Activated naive CD4-positive, alpha-beta T cell treated with anti-CD3 and anti-CD28 coated beads, Interleukin-2, amount 10 ng/mL, durations not matched to agents 7 days and 5 days (primary cell): ENCODE measurements at regions of chr11 and their contacts with region 1.

Region 1: DNA sequence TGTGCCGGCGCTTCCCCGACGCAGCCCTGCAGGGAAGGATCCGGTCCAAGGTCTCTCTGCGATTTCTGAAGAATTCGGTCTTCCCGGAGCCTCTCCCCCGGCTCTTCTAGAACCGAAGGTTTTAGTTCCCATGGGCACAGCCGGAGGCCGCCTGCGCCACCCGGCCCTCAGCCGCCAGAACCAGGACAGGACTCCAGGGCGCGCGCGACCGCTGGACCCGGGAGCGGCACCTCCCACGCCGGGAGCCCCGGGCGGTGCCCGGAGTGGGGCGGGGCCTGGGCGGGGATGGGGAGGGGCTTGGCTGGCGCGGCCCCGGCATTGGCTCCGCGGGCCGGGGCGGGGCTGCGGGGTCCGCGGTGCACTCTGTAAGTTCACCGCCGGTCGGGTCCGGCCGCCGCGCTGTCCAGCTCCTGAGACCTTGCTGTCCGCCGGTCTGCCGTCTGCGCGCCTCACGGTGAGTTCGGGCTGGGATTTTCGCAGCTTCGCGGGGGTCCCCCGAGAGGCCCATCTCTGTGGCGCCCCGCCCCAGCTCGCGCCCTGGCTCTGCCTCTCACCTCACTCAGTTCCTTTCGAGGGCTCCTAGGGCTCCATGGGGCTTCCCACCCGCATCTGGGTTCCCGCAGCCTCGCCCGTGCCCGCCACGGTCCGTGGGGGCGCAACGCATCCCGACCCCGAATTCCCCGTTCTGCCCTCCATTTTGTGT is at the start of gene CDC42EP2:
- DNase-seq: peak; percentile 84
- H3K4me3 Mint-ChIP-seq: peak within 1 kb of the TSS; percentile 70
- H3K27ac Mint-ChIP-seq: no peak within 1 kb of the TSS
- H3K4me1 Mint-ChIP-seq: peaks cover 7% of the 10 kb centered on the region
- H3K27me3 Mint-ChIP-seq: peaks cover 42% of the 10 kb centered on the region

Region 2: DNA sequence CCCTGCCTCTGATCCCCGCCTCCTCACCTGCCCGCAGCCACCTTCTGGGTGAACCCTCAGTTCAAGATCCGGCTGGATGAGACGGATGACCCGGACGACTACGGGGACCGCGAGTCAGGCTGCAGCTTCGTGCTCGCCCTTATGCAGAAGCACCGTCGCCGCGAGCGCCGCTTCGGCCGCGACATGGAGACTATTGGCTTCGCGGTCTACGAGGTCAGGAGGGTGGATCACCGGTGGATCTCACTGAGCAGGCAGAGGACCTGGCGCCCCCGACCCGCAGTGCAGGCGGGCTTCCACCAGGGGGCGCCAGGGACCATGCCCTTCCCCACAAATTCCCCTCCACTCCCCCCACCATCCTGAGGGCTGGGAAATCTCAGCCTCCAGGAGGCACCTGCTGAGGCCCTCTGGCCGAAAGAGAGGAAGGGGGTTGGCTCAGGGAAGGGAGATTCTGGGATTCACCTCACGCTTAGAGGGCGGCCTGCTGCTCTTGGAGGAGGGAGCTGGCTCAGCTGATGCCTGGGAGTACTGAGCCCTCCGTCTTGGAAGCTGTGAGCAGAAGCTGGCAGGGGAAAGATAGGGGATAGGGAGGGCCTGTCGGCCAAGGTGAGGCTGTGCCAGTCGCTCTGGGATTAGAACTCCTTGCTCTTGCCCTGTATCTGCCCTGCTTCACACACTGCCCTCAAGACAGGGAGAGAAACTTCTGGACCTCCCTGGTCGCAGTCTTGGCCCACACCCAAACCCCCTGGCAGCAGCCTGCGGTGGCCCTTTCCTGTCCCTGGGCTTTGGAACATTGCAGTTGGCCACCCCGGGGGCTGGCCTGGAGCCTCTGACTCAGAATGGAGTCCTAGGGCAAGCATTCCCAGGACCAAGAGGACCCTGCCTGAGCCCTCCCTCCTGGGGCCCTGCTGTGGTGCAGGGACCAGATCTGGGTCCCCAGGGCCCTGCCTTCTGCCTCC is 109.7 kb before region 1 on chr11:
- CTCF ChIA-PET with region 1: interaction called, 25 read pairs
- DNase-seq: peak; percentile 63
- H3K4me3 Mint-ChIP-seq: no peak overlapping the region
- H3K27ac Mint-ChIP-seq: no peak overlapping the region
- H3K4me1 Mint-ChIP-seq: peaks cover 6% of the 10 kb centered on the region
- H3K27me3 Mint-ChIP-seq: no peaks in the 10 kb centered on the region

Region 3: DNA sequence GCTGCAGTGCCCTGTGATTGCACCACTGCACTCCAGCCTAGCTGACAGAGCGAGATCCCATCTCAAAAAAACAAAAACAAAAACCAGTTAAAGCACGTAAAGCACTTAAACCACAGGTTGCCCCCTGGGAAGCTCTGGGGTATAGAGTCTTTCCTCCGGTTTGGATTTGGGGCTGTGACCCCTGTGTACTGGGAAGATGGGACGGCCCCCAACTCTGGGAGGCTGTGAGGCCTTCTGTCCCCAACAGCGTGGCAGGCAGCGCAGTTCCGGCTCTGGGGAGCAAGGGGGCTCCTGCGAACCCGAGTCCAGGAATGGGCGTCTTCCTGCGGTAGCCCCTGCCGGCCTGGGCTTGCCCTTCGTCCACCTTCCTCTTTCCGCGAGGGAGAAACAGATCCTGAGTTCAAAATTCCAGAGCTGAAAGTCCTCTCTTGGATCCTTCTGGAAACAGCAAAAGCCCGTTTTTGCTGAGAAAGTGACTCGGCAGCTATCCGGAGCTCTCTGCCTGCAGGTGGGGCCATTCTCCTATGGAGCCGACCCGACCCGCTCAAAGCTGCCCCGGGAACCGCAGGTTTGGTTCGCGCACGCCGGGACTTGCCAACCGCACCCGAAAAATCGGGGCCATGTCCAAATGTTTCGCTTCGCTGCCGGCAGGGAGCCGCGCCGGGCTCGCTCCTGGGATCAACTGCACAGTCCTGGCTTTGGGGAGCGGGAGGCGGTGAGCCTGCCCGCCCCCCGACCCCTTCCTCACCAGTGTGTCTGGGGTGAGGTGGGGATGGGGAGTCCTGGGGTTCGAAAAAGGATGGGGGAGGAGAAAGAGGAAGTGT is 89.2 kb before region 1 on chr11:
- CTCF ChIA-PET with region 1: interaction called, 48 read pairs
- DNase-seq: peak; percentile 78
- H3K4me3 Mint-ChIP-seq: peak overlapping the region; percentile 64
- H3K27ac Mint-ChIP-seq: no peak overlapping the region
- H3K4me1 Mint-ChIP-seq: peaks cover 18% of the 10 kb centered on the region
- H3K27me3 Mint-ChIP-seq: peaks cover 63% of the 10 kb centered on the region

Region 4: DNA sequence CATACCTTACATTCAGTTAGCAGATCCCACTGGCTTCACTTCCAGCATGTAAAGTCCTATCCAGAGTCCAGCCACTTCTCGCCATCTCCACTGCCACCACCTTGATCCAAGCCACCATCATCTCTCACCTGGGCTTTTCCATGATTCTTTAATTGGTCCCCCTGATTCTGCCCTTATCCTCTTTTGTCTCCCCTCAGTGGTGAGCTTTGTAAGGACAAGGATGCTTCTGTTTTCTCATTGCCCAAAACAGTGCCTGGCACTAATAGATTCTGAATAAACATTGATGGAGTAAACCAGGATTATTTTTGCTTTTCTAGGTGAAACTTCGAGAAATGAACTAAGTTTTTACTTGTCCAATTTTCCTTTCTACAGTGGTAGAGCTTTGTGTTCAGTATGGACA is 48.4 kb before region 1 on chr11:
- CTCF ChIA-PET with region 1: interaction called, 12 read pairs
- DNase-seq: no peak
- H3K4me3 Mint-ChIP-seq: no peak overlapping the region
- H3K27ac Mint-ChIP-seq: peak overlapping the region; percentile 6
- H3K4me1 Mint-ChIP-seq: peaks cover 47% of the 10 kb centered on the region
- H3K27me3 Mint-ChIP-seq: no peaks in the 10 kb centered on the region

Region 5: DNA sequence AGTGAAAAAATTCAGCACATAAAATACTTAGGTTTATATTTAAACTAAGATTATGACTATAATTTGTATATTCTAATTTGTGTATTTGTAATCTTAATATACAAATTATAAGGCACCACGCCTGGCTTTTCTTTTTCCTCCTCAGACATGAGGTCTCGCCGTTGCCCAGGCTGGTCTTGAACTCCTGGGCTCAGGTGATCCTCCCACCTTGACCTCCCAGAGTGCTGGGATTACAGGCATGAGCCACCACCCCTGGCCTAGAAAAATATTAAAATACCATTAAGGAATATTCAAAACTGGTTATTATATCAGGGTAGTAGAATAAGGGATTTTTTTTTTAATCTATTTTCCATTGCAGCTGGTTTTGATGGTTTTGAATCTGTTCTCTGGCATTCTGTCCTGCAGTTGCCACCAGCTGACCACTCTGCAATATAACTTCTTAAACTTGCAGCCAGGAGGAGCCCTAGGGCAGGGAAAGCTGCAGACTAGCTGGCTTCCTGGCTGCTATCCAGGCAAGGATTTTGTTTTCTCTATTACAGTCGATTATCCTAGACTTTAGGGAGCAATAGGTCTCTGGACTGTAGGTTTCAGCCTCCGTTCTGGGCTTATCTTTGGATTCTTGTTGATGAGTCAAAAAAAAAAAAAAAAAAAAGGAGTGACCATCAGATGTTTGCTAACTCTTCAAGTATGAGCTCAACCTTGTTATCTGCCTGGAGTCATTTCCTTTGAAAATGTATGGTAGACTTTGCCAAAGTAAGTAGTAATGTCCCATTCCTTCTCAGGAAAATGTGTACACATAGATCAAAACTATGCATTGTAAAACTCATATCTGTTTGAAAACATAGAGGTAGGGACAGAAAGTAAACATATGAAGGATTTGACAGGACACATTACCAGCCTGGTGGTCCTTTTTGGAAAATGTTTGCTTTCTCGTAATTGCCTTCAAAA is 39.6 kb before region 1 on chr11:
- CTCF ChIA-PET with region 1: interaction called, 71 read pairs
- DNase-seq: peak; percentile 58
- H3K4me3 Mint-ChIP-seq: no peak overlapping the region
- H3K27ac Mint-ChIP-seq: no peak overlapping the region
- H3K4me1 Mint-ChIP-seq: peaks cover 2% of the 10 kb centered on the region
- H3K27me3 Mint-ChIP-seq: no peaks in the 10 kb centered on the region

Region 6: DNA sequence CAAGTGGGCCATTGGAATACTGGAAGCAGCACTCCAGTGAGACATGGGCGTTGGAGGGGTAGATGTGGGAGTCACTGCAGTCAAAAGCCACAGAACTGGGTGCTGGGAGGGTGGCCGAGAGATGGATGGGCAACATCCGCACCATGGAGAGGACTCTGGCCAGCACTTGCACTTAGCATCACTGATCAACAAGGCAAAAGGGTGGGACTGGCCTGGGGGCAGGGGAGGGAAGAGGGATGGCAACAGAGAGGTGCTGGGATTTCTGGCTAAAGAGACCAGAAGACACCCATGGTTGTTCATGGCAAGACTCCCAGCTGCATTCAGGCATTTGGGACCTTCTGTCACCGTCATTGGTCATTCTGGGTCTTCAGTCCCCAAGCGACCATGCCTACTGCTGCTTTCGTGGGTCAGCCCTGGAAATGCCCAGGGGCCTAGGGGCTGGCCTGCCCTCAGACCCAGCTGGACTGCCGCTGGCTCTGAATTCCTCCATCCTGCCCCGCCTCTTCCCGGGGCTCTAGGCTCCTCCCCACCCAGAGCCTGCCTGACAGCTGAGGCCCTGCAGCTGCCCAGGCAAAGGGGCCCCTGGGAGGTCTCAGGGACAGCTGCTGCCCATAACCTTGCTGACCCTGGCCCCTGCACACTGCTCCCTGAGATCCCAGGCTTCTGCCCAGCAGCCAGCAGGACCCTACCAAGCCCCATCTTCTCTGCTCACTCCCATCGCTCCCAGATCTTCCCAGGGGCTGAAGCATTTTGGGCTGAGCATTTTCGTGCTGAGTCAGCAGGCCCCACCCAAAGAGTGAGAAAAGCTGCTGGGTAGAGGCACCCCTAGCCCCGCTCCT is 12.9 kb before region 1 on chr11:
- CTCF ChIA-PET with region 1: interaction called, 12 read pairs
- DNase-seq: no peak
- H3K4me3 Mint-ChIP-seq: no peak overlapping the region
- H3K27ac Mint-ChIP-seq: no peak overlapping the region
- H3K4me1 Mint-ChIP-seq: no peaks in the 10 kb centered on the region
- H3K27me3 Mint-ChIP-seq: no peaks in the 10 kb centered on the region

Region 7: DNA sequence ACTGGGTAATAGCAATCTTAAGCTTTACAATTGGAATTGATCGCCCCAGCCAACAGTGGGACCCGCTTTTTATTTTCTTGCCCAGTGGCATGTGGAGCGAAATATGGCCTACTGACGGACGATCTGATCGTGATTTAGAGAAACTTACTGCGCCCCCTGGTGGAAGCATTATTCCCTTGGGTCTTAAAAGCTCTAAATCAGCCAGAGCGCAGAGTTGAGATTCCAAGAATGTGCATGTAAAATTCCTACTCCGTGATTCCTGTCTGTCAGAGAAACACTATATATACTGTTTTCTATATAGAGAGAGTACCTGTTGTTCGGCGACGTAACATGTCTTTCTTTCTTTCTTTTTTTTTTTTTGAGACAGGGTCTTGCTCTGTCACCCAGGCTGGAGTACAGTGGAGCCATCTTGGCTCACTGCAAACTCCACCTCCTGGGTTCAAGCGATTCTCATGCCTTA is 15.3 kb after region 1 on chr11:
- CTCF ChIA-PET with region 1: interaction called, 125 read pairs
- DNase-seq: peak; percentile 88
- H3K4me3 Mint-ChIP-seq: no peak overlapping the region
- H3K27ac Mint-ChIP-seq: no peak overlapping the region
- H3K4me1 Mint-ChIP-seq: peaks cover 19% of the 10 kb centered on the region
- H3K27me3 Mint-ChIP-seq: peaks cover 11% of the 10 kb centered on the region

Region 8: DNA sequence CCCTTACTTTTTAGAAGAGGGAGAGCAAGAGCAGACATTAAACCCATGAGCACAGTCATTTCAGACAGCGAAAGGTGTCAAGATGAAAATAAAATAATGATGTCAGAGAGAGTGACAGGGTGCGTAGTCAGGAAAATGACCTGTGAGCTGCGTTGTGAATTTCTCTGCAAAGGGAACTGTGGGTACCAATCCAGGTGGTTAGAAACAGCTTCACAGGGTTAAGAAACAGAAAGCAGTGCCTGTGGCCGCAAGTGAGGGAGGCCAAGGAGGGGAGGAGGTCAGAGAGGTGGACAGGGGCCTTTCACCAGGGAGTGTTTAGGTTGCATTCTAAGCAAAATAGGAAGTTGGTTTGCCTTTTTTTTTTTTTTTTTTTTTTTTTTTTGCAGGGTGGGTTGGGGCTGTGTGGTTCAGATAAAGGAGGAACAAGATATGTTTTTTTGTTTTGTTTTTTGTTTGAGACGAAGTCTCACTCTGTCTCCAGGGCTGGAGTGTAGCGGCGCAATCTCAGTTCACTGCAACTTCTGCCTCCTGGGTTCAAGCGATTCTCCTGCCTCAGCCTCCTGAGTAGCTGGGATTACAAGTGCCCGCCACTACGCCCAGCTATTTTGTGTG is 47.8 kb after region 1 on chr11:
- CTCF ChIA-PET with region 1: no interaction called
- DNase-seq: no peak
- H3K4me3 Mint-ChIP-seq: no peak overlapping the region
- H3K27ac Mint-ChIP-seq: no peak overlapping the region
- H3K4me1 Mint-ChIP-seq: peaks cover 11% of the 10 kb centered on the region
- H3K27me3 Mint-ChIP-seq: peaks cover 17% of the 10 kb centered on the region